GM12878 (cell line): ENCODE measurements at regions of chr14 and their contacts with region 1.

Region 1: DNA sequence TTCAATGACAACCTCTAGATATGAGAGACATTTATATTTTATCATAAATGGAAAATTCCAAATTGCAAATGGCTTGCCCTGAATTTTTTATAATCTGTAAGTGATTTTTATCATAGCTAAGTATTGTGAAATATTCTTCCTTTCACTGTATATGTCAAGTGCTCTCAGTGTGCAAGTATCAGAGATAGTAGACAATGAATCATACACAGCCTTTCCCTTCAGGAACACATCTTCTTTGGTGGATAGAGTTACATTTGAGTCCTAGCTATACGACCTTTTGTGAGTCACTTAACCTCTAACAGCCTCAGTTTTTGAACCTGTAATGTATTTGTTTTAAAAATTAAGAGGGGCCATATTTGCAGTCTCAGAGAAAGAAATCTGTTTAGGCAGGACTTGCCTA is 350.7 kb upstream of the SEL1L start:
- DNase-seq: no peak
- ATAC-seq: no peak
- H3K4me3 ChIP-seq: no peak overlapping the region
- H3K27ac ChIP-seq: no peak overlapping the region
- H3K4me1 ChIP-seq: no peaks in the 10 kb centered on the region
- H3K27me3 ChIP-seq: no peaks in the 10 kb centered on the region
- CTCF ChIP-seq: no peak
- EP300 ChIP-seq: no peak
- POLR2A ChIP-seq: no peak
- RAD21 ChIP-seq: no peak

Region 2: GRCh38 chr14:81946834-81947798 is 62.7 kb after region 1 on chr14:
- CTCF ChIA-PET with region 1: no interaction called
- POLR2A ChIA-PET with region 1: no interaction called
- RAD21 ChIA-PET with region 1: no interaction called
- SMC1A ChIA-PET with region 1: interaction called, 3 read pairs
- in situ Hi-C with region 1: no loop called
- intact Hi-C with region 1: loop called (anchors 2 kb)
- DNase-seq: no peak
- ATAC-seq: no peak
- H3K4me3 ChIP-seq: no peak overlapping the region
- H3K27ac ChIP-seq: no peak overlapping the region
- H3K4me1 ChIP-seq: no peaks in the 10 kb centered on the region
- H3K27me3 ChIP-seq: no peaks in the 10 kb centered on the region
- CTCF ChIP-seq: no peak
- EP300 ChIP-seq: no peak
- POLR2A ChIP-seq: no peak
- RAD21 ChIP-seq: no peak